Dorsolateral prefrontal cortex (tissue), 120 donors: ENCODE measurements at regions of chr11 and their contacts with region 1.

Region 1: GRCh38 chr11:112655371-112655770 is 305.8 kb upstream of the NCAM1 start:
- DNase-seq: peak; percentile 11 to 93 (median 78)
- H3K4me3 ChIP-seq: no peak overlapping the region
- H3K27ac ChIP-seq: peak overlapping the region in 34 of 59 donors; percentile 2 to 90 (median 51)
- H3K27me3 ChIP-seq: no peaks in the 10 kb centered on the region
- CTCF ChIP-seq: peak in 54 of 56 donors; percentile 16 to 76 (median 46)

Region 2: DNA sequence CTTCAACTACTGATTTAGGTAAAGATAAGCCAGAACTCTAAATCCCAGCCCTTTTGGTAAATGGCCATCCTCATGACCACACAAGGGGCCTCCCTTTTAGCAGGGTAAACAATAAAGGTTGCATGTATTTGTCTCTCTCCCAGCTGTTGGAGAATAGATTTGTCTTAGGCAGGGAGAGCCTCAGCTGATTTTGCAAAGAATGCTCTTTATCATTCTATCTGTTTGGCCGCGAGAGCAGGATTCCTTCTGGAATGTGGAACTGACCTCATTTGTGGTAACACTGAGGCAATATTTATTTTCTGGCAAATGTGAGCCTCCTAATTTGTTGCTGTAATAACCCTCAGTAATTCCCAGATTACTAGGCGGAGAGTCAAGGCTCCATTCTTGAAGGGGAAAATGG is 413.9 kb before region 1 on chr11:
- intact Hi-C with region 1: no loop called
- DNase-seq: no peak
- H3K4me3 ChIP-seq: no peak overlapping the region
- H3K27ac ChIP-seq: no peak overlapping the region
- H3K27me3 ChIP-seq: no peaks in the 10 kb centered on the region
- CTCF ChIP-seq: no peak

Region 3: GRCh38 chr11:112613051-112613972 is 42.1 kb before region 1 on chr11:
- intact Hi-C with region 1: no loop called
- DNase-seq: peak in 1 of 10 donors; percentile 57
- H3K4me3 ChIP-seq: no peak overlapping the region
- H3K27ac ChIP-seq: peak overlapping the region in 42 of 59 donors; percentile 0 to 77 (median 40)
- H3K27me3 ChIP-seq: no peaks in the 10 kb centered on the region
- CTCF ChIP-seq: no peak

Region 4: GRCh38 chr11:112734207-112734606 is 78.8 kb after region 1 on chr11:
- intact Hi-C with region 1: loop called (anchors 2 to 5 kb)
- DNase-seq: no peak
- H3K4me3 ChIP-seq: no peak overlapping the region
- H3K27ac ChIP-seq: peak overlapping the region in 9 of 59 donors; percentile 10 to 98 (median 91)
- H3K27me3 ChIP-seq: no peaks in the 10 kb centered on the region
- CTCF ChIP-seq: no peak

Region 5: DNA sequence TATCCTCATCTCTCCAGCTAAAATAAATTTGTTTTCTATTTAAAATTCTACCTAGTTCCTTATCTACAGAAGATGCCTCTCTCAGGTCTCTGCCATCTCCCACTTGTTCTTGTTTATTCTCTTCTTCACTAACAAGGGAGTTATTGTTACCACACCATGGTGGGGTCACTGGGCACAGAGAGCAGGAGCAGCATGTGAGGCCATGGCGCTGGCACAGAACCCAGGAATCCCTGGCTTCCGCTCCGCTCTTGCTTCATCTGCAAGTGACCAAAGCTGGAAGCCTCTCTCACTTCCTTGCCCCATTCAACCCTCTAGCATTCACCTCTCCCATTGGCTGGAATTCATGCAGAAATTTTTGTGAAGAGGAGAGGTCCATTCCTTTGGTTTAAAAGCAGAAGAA is 115.1 kb after region 1 on chr11:
- intact Hi-C with region 1: loop called (anchors 5 to 10 kb)
- DNase-seq: peak; percentile 28 to 93 (median 84)
- H3K4me3 ChIP-seq: no peak overlapping the region
- H3K27ac ChIP-seq: peak overlapping the region in 58 of 59 donors; percentile 72 to 99 (median 91)
- H3K27me3 ChIP-seq: no peaks in the 10 kb centered on the region
- CTCF ChIP-seq: peak in 6 of 56 donors; percentile 9 to 20 (median 14)

Region 6: GRCh38 chr11:112777283-112777751 is 121.9 kb after region 1 on chr11:
- intact Hi-C with region 1: loop called (anchors 5 to 10 kb)
- DNase-seq: no peak
- H3K4me3 ChIP-seq: no peak overlapping the region
- H3K27ac ChIP-seq: peak overlapping the region in 48 of 59 donors; percentile 1 to 83 (median 62)
- H3K27me3 ChIP-seq: no peaks in the 10 kb centered on the region
- CTCF ChIP-seq: no peak

Region 7: GRCh38 chr11:112795142-112795815 is 139.9 kb after region 1 on chr11:
- intact Hi-C with region 1: loop called in 1 of 2 experiments (anchors 1 kb)
- DNase-seq: peak in 5 of 10 donors; percentile 59 to 70 (median 67)
- H3K4me3 ChIP-seq: peak overlapping the region in 1 of 59 donors; percentile 6
- H3K27ac ChIP-seq: peak overlapping the region in 26 of 59 donors; percentile 3 to 83 (median 72)
- H3K27me3 ChIP-seq: no peaks in the 10 kb centered on the region
- CTCF ChIP-seq: peak; percentile 21 to 78 (median 54)

Region 8: GRCh38 chr11:112837162-112837826 is 181.9 kb after region 1 on chr11:
- intact Hi-C with region 1: loop called in 1 of 2 experiments (anchors 5 kb)
- DNase-seq: peak in 8 of 10 donors; percentile 42 to 80 (median 66)
- H3K4me3 ChIP-seq: no peak overlapping the region
- H3K27ac ChIP-seq: peak overlapping the region in 15 of 59 donors; percentile 0 to 55 (median 33)
- H3K27me3 ChIP-seq: no peaks in the 10 kb centered on the region
- CTCF ChIP-seq: peak in 54 of 56 donors; percentile 25 to 80 (median 58)

Region 9: GRCh38 chr11:113289431-113290187 is 634.2 kb after region 1 on chr11:
- intact Hi-C with region 1: loop called in 1 of 2 experiments (anchors 5 kb)
- DNase-seq: peak; percentile 64 to 83 (median 66)
- H3K4me3 ChIP-seq: no peak overlapping the region
- H3K27ac ChIP-seq: no peak overlapping the region
- H3K27me3 ChIP-seq: peaks cover 0 to 4% (median 0%) of the 10 kb centered on the region in 45 donors
- CTCF ChIP-seq: peak; percentile 73 to 98 (median 89)